Psoas muscle (tissue), 8 donors: ENCODE measurements at regions of chr5 and their contacts with region 1.

Region 1: GRCh38 chr5:14142827-14143548 is at the start of gene TRIO:
- DNase-seq: peak; percentile 88 to 95
- ATAC-seq: peak; percentile 77 to 85 (median 81)
- H3K4me3 ChIP-seq: peak within 1 kb of the TSS; percentile 96
- H3K27ac ChIP-seq: peak within 1 kb of the TSS; percentile 95
- H3K4me1 ChIP-seq: peaks cover 52% of the 10 kb centered on the region
- H3K27me3 ChIP-seq: no peaks in the 10 kb centered on the region
- CTCF ChIP-seq: peak; percentile 53
- total RNA-seq, gene TRIO: 35.0 to 77.5 (median 51.7) TPM

Region 2: DNA sequence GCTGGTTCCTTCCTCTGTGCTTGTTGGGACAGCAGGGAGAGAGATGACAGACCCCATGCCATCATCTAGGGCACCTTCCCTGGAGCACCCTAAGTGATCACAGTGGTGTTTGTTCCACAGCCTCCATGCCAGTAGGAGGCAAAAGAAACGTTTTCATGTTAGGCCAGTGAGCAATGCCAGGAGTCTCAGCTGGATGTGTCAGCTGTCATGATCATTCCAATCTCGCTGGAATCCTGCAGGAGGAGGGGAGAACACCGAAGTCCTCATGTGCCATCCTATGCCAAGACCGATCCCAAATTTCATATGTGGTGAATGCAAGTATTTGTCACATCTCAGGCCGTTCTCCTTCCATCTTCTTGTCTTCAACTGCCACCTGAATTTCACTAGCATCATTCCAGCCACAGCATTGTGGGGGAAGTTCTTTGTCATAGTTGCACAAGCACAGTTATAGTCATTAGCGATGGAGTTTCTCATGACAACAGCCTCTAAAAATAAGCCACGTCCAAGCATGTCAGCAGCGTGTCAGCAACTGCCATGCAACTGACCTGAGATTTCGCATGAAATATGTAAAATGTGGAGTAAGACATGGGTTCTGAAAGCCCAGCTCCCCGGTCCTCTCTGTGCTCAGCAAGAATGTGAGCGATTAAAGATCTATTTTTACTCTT is 101.3 kb before region 1 on chr5:
- intact Hi-C with region 1: loop called in 1 of 2 experiments (anchors 5 kb)
- DNase-seq: no peak
- ATAC-seq: peak; percentile 84 to 94 (median 90)
- H3K4me3 ChIP-seq: no peak overlapping the region
- H3K27ac ChIP-seq: peak overlapping the region; percentile 65
- H3K4me1 ChIP-seq: peaks cover 32% of the 10 kb centered on the region
- H3K27me3 ChIP-seq: no peaks in the 10 kb centered on the region
- CTCF ChIP-seq: no peak

Region 3: GRCh38 chr5:14184725-14185124 is 41.7 kb after region 1 on chr5:
- intact Hi-C with region 1: loop called in 1 of 2 experiments (anchors 5 kb)
- DNase-seq: no peak
- ATAC-seq: peak in 2 of 4 donors; percentile 22
- H3K4me3 ChIP-seq: no peak overlapping the region
- H3K27ac ChIP-seq: peak overlapping the region; percentile 80
- H3K4me1 ChIP-seq: peaks cover 82% of the 10 kb centered on the region
- H3K27me3 ChIP-seq: no peaks in the 10 kb centered on the region
- CTCF ChIP-seq: no peak

Region 4: GRCh38 chr5:14199902-14200301 is 56.9 kb after region 1 on chr5:
- intact Hi-C with region 1: loop called in 1 of 2 experiments (anchors 5 kb)
- DNase-seq: peak in 1 of 2 donors; percentile 61
- ATAC-seq: peak; percentile 93 to 98 (median 98)
- H3K4me3 ChIP-seq: no peak overlapping the region
- H3K27ac ChIP-seq: peak overlapping the region; percentile 67
- H3K4me1 ChIP-seq: peaks cover 71% of the 10 kb centered on the region
- H3K27me3 ChIP-seq: no peaks in the 10 kb centered on the region
- CTCF ChIP-seq: no peak

Region 5: DNA sequence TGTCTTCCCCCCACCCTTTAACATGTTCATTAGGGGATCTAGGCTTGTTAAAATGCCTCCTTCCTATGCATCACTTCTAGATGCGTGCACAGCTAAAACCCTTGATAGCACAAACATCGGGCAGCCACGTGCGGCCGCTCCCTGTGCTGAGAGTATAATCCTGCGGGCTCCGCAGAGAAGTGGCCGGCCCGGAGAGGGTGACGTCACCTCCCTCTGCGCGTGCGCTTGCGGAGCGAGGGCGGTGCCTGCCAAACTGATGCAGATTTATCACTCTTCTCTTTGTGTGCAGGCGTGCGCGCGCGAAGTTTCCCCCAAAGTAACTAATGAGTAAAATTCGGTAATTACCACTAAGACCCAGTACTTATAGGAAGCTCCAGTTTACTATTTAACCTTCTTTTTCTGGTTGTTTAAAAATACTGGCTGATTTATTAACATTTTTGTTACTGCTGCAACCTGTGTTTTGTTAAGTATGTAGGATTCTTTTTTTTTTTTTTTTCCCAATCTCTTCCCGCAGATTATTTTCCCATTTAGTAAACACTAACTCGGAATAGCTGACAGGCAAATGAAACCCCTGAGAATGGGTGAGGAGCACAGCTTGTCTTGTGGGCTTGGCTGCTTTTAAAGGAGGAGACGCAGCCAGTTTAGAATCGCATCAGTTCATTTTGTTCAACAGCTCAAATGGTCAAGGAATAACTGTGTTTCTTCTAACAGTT is 121.8 kb after region 1 on chr5:
- intact Hi-C with region 1: loop called (anchors 2 to 5 kb)
- DNase-seq: peak; percentile 89 to 95
- ATAC-seq: peak; percentile 81 to 90 (median 85)
- H3K4me3 ChIP-seq: peak overlapping the region; percentile 48
- H3K27ac ChIP-seq: peak overlapping the region; percentile 67
- H3K4me1 ChIP-seq: peaks cover 76% of the 10 kb centered on the region
- H3K27me3 ChIP-seq: no peaks in the 10 kb centered on the region
- CTCF ChIP-seq: no peak

Region 6: GRCh38 chr5:14270209-14270702 is 127.3 kb after region 1 on chr5:
- intact Hi-C with region 1: loop called (anchors 2 to 5 kb)
- DNase-seq: peak; percentile 48 to 80
- ATAC-seq: peak; percentile 83 to 95 (median 90)
- H3K4me3 ChIP-seq: no peak overlapping the region
- H3K27ac ChIP-seq: peak overlapping the region; percentile 86
- H3K4me1 ChIP-seq: peaks cover 55% of the 10 kb centered on the region
- H3K27me3 ChIP-seq: no peaks in the 10 kb centered on the region
- CTCF ChIP-seq: peak; percentile 85

Region 7: GRCh38 chr5:14510156-14510734 is 367.3 kb after region 1 on chr5:
- intact Hi-C with region 1: no loop called
- DNase-seq: no peak
- ATAC-seq: no peak
- H3K4me3 ChIP-seq: no peak overlapping the region
- H3K27ac ChIP-seq: no peak overlapping the region
- H3K4me1 ChIP-seq: no peaks in the 10 kb centered on the region
- H3K27me3 ChIP-seq: no peaks in the 10 kb centered on the region
- CTCF ChIP-seq: no peak